ENCODE measurements at regions of chr5 and their contacts with region 1.

Region 1: DNA sequence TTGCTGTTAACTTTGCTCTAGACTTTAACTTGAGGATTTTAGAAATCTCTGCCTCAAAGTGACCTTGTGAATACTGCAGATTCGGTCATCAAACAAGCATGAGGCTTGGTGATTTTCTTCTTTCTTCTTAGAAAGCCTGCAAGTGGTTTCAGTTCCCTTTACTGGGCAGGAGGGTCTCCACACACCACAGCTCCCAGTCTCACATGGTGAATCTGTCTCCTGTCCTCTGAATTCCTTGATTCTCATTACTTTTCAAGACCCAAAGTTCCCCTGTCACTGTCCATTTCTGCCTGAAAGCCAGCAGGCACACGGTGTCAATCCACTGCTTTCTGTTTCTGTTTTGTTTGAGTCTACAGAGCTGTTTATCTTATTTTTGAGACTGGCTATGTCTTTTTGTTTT is 14.1 kb downstream of the HSPB3 start:
- DNase-seq: no peak
- ATAC-seq: no peak
- H3K4me3 ChIP-seq: no peak overlapping the region
- H3K4me3 Mint-ChIP-seq: peak overlapping the region; percentile 56
- H3K27ac ChIP-seq: no peak overlapping the region
- H3K27ac Mint-ChIP-seq: no peak overlapping the region
- H3K4me1 ChIP-seq: no peaks in the 10 kb centered on the region
- H3K4me1 Mint-ChIP-seq: peaks cover 2% of the 10 kb centered on the region
- H3K27me3 ChIP-seq: no peaks in the 10 kb centered on the region
- H3K27me3 Mint-ChIP-seq: peaks cover 4% of the 10 kb centered on the region
- CTCF ChIP-seq: no peak

Region 2: DNA sequence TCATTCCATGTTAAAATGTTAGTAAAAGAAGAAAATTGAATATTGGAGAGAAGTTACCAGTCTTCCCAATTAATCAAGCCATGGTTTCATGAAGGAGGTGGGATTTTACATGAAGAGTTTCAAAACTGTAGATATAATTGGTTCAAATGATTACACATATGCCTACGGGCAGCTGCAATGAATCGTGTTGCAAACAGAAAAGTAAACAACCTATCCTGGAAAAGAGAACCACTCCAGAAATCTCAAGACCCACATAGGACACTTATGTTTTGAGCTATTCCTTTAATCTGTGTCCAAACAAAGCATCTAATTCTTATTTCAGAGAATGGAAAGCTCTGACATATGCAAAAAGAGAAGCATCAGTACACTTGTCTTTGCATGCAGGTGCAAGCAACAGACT is 568.9 kb before region 1 on chr5:
- CTCF ChIA-PET with region 1: no interaction called
- POLR2A ChIA-PET with region 1: no interaction called
- intact Hi-C with region 1: no loop called
- DNase-seq: no peak
- ATAC-seq: no peak
- H3K4me3 ChIP-seq: no peak overlapping the region
- H3K4me3 Mint-ChIP-seq: no peak overlapping the region
- H3K27ac ChIP-seq: no peak overlapping the region
- H3K27ac Mint-ChIP-seq: no peak overlapping the region
- H3K4me1 ChIP-seq: no peaks in the 10 kb centered on the region
- H3K4me1 Mint-ChIP-seq: no peaks in the 10 kb centered on the region
- H3K27me3 ChIP-seq: no peaks in the 10 kb centered on the region
- H3K27me3 Mint-ChIP-seq: no peaks in the 10 kb centered on the region
- CTCF ChIP-seq: no peak

Region 3: DNA sequence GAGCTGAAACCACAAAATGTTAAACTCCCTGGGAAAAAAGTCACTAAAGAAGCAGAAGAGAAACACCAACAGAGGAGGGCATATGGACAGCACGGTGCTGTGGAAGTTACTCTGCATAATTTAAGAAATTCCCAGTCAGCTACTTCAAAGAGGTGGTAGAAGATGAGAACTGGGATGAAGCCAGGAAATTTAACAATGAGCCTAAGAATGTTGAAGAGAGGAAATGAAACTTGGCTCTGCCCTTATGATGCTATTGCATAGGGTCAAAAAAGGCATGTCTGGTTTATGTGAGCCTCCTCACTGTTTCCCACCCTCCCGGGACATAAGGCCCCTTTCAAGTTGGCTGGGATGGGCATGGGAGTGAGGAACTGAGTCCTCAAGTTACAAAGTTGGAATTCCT is 22.6 kb after region 1 on chr5:
- CTCF ChIA-PET with region 1: interaction called, 18 read pairs
- POLR2A ChIA-PET with region 1: no interaction called
- intact Hi-C with region 1: no loop called
- DNase-seq: no peak
- ATAC-seq: no peak
- H3K4me3 ChIP-seq: no peak overlapping the region
- H3K4me3 Mint-ChIP-seq: no peak overlapping the region
- H3K27ac ChIP-seq: no peak overlapping the region
- H3K27ac Mint-ChIP-seq: no peak overlapping the region
- H3K4me1 ChIP-seq: no peaks in the 10 kb centered on the region
- H3K4me1 Mint-ChIP-seq: peaks cover 3% of the 10 kb centered on the region
- H3K27me3 ChIP-seq: peaks cover 3 to 4% of the 10 kb centered on the region in 2 experiments
- H3K27me3 Mint-ChIP-seq: peaks cover 8% of the 10 kb centered on the region
- CTCF ChIP-seq: no peak

Region 4: GRCh38 chr5:56409331-56410190 is 1939.9 kb after region 1 on chr5:
- CTCF ChIA-PET with region 1: no interaction called
- POLR2A ChIA-PET with region 1: no interaction called
- intact Hi-C with region 1: loop called in 1 of 2 experiments (anchors 10 kb)
- DNase-seq: no peak
- ATAC-seq: no peak
- H3K4me3 ChIP-seq: no peak overlapping the region
- H3K4me3 Mint-ChIP-seq: no peak overlapping the region
- H3K27ac ChIP-seq: no peak overlapping the region
- H3K27ac Mint-ChIP-seq: no peak overlapping the region
- H3K4me1 ChIP-seq: no peaks in the 10 kb centered on the region
- H3K4me1 Mint-ChIP-seq: no peaks in the 10 kb centered on the region
- H3K27me3 ChIP-seq: no peaks in the 10 kb centered on the region
- H3K27me3 Mint-ChIP-seq: no peaks in the 10 kb centered on the region
- CTCF ChIP-seq: no peak